PC-3 (cell line): ENCODE measurements at regions of chr6 and their contacts with region 1.

Region 1: GRCh38 chr6:35297601-35298481 is at the start of gene DEF6:
- DNase-seq: peak; percentile 95
- ATAC-seq: peak; percentile 95
- H3K4me3 ChIP-seq: peak within 1 kb of the TSS; percentile 67
- H3K27ac ChIP-seq: peak within 1 kb of the TSS; percentile 22; the same call in 1 of the 2 replicates
- H3K4me1 ChIP-seq: peaks cover 27% of the 10 kb centered on the region
- H3K27me3 ChIP-seq: no peaks in the 10 kb centered on the region
- CTCF ChIP-seq: peak; percentile 96
- total RNA-seq, gene DEF6: 37.3 and 42.8 TPM in 2 replicates

Region 2: GRCh38 chr6:35318196-35319171 is 20.6 kb after region 1 on chr6:
- CTCF ChIA-PET with region 1: no interaction called
- POLR2A ChIA-PET with region 1: interaction called, 3 read pairs
- intact Hi-C with region 1: loop called (anchors 2 kb)
- DNase-seq: peak; percentile 88
- ATAC-seq: peak; percentile 99
- H3K4me3 ChIP-seq: peak overlapping the region; percentile 70
- H3K27ac ChIP-seq: no peak overlapping the region
- H3K4me1 ChIP-seq: peaks cover 9% of the 10 kb centered on the region
- H3K27me3 ChIP-seq: no peaks in the 10 kb centered on the region
- CTCF ChIP-seq: no peak

Region 3: DNA sequence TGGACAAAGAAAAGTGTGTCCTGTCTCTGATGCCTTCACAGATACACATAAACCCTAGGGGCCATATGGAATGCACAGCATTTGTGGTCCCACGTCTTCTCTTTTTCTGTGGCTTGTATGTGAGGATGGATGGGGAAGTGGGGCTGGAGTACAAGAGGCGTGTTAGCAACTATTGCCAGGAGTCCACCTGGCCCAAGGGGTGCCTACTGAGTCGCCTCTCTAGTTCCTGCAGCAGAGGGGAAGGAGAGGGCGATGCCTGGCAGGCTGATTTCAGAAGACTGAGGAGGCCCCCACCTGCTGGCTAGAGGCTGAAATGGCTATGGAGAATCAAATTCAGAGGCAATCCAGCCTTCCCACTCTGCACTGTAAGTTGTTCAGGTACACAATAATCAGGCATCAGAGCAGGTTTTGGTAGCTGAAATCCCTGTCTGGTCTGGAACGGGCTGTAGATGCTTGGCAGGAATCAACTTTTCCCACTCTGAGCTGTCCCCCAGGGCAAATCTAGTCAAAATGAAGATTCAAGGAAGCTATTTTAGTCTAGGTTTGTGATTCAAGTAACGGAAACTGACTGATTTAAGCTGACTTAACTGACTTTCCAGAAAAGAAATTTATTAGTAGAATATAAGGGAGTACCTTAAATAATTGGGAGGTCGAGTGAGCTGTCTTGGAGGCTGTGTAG is 29.6 kb after region 1 on chr6:
- CTCF ChIA-PET with region 1: interaction called, 4 read pairs
- POLR2A ChIA-PET with region 1: interaction called, 3 read pairs
- intact Hi-C with region 1: loop called (anchors 1 kb)
- DNase-seq: peak; percentile 71
- ATAC-seq: peak; percentile 85
- H3K4me3 ChIP-seq: no peak overlapping the region
- H3K27ac ChIP-seq: no peak overlapping the region
- H3K4me1 ChIP-seq: 0 out of 2 replicates have a peak, but pooled peaks cover 4% of the 10 kb centered on the region
- H3K27me3 ChIP-seq: no peaks in the 10 kb centered on the region
- CTCF ChIP-seq: peak; percentile 78

Region 4: DNA sequence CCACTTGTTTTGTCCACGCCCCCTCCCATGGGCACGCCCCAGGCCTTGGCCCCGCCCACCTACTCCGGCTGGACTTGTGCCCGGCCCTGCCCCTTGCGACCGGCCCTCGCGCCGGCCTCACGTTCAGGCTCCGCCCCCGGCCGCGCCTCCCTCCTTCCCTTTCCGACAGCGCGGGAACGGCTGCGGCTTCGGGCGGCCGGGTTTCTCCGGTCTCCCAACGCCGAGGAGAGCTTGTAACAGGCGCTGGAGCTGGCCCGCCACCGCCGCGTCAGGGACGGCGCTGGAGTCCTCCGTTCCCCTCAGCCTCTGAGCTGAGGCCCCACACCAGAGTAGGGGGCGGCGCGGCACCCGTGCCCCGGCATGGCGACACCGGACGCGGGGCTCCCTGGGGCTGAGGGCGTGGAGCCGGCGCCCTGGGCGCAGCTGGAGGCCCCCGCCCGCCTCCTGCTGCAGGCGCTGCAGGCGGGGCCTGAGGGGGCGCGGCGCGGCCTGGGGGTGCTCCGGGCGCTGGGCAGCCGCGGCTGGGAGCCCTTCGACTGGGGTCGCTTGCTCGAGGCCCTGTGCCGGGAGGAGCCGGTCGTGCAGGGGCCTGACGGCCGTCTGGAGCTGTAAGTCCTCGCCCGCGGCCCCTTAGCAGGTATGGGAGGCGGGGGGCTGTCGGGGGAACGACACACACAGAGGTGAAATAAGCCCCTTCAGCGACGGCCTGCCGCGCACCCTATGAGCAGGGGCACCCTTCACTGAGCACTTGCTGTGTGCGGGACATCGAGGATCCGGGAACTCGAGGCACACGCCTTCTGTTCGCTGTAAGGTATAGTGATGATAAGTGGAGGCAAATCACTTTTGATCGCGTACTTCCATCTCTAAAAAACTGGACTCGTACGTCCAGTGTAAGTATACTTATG is 154.6 kb after region 1 on chr6 and contains the start of gene FANCE:
- CTCF ChIA-PET with region 1: interaction called, 3 read pairs
- POLR2A ChIA-PET with region 1: no interaction called
- intact Hi-C with region 1: loop called (anchors 1 kb)
- DNase-seq: peak; percentile 95
- ATAC-seq: peak; percentile 79
- H3K4me3 ChIP-seq: peak within 1 kb of the TSS; percentile 79
- H3K27ac ChIP-seq: no peak within 1 kb of the TSS
- H3K4me1 ChIP-seq: peaks cover 19% of the 10 kb centered on the region
- H3K27me3 ChIP-seq: no peaks in the 10 kb centered on the region
- CTCF ChIP-seq: no peak
- total RNA-seq, gene FANCE: 13.8 and 18.6 TPM in 2 replicates

Region 5: GRCh38 chr6:35468181-35468979 is 170.5 kb after region 1 on chr6 and contains the start of gene RPL10A:
- CTCF ChIA-PET with region 1: no interaction called
- POLR2A ChIA-PET with region 1: no interaction called
- intact Hi-C with region 1: loop called (anchors 1 kb)
- DNase-seq: peak; percentile 98
- ATAC-seq: peak; percentile 85
- H3K4me3 ChIP-seq: peak within 1 kb of the TSS; percentile 82
- H3K27ac ChIP-seq: peak within 1 kb of the TSS; percentile 81
- H3K4me1 ChIP-seq: peaks cover 27% of the 10 kb centered on the region
- H3K27me3 ChIP-seq: no peaks in the 10 kb centered on the region
- CTCF ChIP-seq: peak; percentile 96
- total RNA-seq, gene RPL10A: 1,114 and 1,509 TPM in 2 replicates